MCF 10A (cell line): ENCODE measurements at regions of chr20 and their contacts with region 1.

Region 1: GRCh38 chr20:4949833-4950178 is 51.5 kb downstream of the SLC23A2 start:
- DNase-seq: peak; percentile 42
- H3K4me3 Mint-ChIP-seq: no peak overlapping the region
- H3K27ac Mint-ChIP-seq: peak overlapping the region; percentile 64
- H3K4me1 Mint-ChIP-seq: peaks cover 21% of the 10 kb centered on the region
- H3K27me3 Mint-ChIP-seq: no peaks in the 10 kb centered on the region
- CTCF ChIP-seq: peak; percentile 48

Region 2: DNA sequence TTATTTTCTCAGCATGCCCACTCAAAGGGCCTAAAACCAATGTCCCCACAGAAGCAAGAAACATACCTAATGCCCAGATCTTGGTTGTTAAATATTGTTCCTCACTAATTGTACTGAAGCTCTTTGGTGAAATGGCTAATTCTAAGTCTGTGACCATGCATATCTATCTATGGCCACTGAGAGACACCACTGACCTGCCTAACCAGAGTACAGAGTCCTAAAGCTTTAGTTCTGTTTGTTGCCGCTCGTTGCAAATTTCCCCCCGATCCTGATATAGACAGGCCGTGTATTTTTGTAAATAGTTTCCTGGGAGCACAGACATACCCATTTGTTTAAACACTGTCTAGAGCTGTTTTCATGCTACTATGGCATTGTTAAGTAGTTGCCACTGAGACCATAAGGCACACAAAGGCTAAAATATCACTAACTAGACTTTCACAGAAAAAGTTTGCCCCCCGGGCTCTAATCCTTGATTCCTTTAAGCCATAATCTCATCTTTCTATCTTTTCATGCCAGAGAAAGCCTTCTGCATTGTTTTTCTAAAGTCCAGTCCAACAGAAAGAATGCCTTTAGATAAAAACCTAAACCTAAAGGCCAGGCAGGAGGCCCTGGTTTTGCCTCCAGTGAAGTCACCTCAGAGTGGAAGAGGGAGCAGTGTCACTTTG is 1591.0 kb before region 1 on chr20:
- CTCF ChIA-PET with region 1: no interaction called
- POLR2A ChIA-PET with region 1: no interaction called
- intact Hi-C with region 1: no loop called
- DNase-seq: no peak
- H3K4me3 Mint-ChIP-seq: no peak overlapping the region
- H3K27ac Mint-ChIP-seq: no peak overlapping the region
- H3K4me1 Mint-ChIP-seq: peaks cover 5% of the 10 kb centered on the region
- H3K27me3 Mint-ChIP-seq: no peaks in the 10 kb centered on the region
- CTCF ChIP-seq: no peak

Region 3: GRCh38 chr20:4883546-4883945 is 66.3 kb before region 1 on chr20:
- CTCF ChIA-PET with region 1: no interaction called
- POLR2A ChIA-PET with region 1: no interaction called
- intact Hi-C with region 1: no loop called
- DNase-seq: no peak
- H3K4me3 Mint-ChIP-seq: no peak overlapping the region
- H3K27ac Mint-ChIP-seq: no peak overlapping the region
- H3K4me1 Mint-ChIP-seq: no peaks in the 10 kb centered on the region
- H3K27me3 Mint-ChIP-seq: no peaks in the 10 kb centered on the region
- CTCF ChIP-seq: no peak

Region 4: GRCh38 chr20:4898282-4899244 is 51.2 kb before region 1 on chr20:
- CTCF ChIA-PET with region 1: interaction called, 14 read pairs
- POLR2A ChIA-PET with region 1: no interaction called
- intact Hi-C with region 1: no loop called
- DNase-seq: peak; percentile 91
- H3K4me3 Mint-ChIP-seq: peak overlapping the region; percentile 25
- H3K27ac Mint-ChIP-seq: peak overlapping the region; percentile 35
- H3K4me1 Mint-ChIP-seq: peaks cover 33% of the 10 kb centered on the region
- H3K27me3 Mint-ChIP-seq: no peaks in the 10 kb centered on the region
- CTCF ChIP-seq: no peak